ENCODE measurements at regions of chr18 and their contacts with region 1.

Region 1: GRCh38 chr18:21851327-21851972 is 110.9 kb downstream of the MIB1 start:
- DNase-seq: no peak
- ATAC-seq: no peak
- H3K4me3 ChIP-seq: no peak overlapping the region
- H3K27ac ChIP-seq: no peak overlapping the region
- H3K4me1 ChIP-seq: no peaks in the 10 kb centered on the region
- H3K27me3 ChIP-seq: no peaks in the 10 kb centered on the region

Region 2: DNA sequence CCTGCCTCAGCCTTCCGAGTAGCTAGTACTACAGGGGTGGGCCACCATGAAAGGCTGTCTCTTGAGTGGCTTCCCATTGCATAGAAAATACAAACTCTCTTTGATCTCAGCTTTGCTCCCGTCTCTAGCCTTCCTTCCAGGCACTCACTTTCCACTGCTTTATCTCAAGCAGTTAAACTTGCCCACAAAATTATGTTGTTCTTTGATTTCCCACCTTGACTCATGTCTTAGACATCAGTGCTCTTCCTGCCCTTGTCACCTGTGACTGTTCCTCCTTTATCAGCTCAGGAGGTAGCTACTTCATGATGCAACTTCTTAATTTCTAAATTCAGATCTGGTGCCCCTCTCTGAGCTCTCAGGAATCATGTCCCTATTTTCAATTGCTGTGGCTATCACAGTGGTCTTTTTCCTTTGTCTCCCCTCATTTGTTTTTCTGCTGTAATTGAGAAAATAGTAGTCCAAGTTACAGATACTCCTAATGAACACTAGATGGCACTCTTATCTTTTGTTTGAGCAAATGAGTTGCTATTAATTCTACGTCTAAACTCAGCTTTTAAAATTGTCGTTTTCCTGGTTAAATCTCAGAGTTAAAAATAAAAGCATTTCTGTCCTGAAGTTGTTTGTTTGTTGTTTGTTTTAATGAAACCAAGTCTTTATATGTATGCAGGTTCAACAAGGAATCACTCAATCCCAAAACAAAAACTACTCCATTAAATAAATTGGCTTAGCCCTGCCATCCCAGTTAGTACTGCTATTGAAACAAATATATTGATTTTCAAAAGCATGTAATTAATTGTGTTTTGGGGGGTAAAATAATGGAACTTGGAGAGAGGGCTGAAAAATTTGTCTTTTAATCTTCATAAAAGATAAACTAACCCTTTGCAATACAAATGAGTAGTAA is 656.3 kb before region 1 on chr18:
- intact Hi-C with region 1: loop called in 1 of 2 experiments (anchors 10 kb)
- DNase-seq: no peak
- ATAC-seq: no peak
- H3K4me3 ChIP-seq: no peak overlapping the region
- H3K27ac ChIP-seq: no peak overlapping the region
- H3K4me1 ChIP-seq: no peaks in the 10 kb centered on the region
- H3K27me3 ChIP-seq: no peaks in the 10 kb centered on the region

Region 3: DNA sequence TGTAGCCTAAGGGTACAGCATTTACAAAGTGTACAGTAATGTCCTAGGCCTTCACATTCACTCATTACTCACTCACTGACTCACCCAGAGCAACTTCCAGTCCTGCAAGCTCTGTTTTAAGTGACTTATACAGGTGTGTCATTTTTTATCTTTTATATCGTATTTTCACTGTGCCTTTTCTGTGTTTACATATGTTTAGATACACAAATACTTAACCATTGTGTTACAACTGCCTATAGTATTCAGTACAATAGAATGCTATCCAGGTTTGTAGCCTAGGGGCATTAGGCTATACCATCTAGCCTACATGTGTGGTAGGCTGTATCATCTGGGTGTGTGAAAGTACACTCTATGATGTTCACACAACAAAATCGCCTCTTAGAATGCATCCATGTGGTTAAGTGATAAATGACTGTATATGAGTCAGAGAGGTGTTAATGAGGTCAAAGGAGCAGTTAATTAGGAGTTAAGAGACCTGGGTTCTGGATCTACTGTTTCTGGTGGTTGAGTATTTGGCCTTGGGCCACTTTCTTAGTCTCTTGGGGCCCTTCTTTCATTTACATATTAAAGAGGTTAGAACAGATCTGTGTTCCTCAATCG is 460.3 kb before region 1 on chr18:
- intact Hi-C with region 1: loop called in 1 of 2 experiments (anchors 10 kb)
- DNase-seq: no peak
- ATAC-seq: no peak
- H3K4me3 ChIP-seq: no peak overlapping the region
- H3K27ac ChIP-seq: no peak overlapping the region
- H3K4me1 ChIP-seq: peaks cover 0 to 3% of the 10 kb centered on the region in 2 donors
- H3K27me3 ChIP-seq: no peaks in the 10 kb centered on the region

Region 4: GRCh38 chr18:21489119-21489750 is 362.2 kb before region 1 on chr18:
- intact Hi-C with region 1: loop called (anchors 10 kb)
- DNase-seq: no peak
- ATAC-seq: peak; percentile 50
- H3K4me3 ChIP-seq: no peak overlapping the region
- H3K27ac ChIP-seq: no peak overlapping the region
- H3K4me1 ChIP-seq: no peaks in the 10 kb centered on the region
- H3K27me3 ChIP-seq: no peaks in the 10 kb centered on the region

Region 5: DNA sequence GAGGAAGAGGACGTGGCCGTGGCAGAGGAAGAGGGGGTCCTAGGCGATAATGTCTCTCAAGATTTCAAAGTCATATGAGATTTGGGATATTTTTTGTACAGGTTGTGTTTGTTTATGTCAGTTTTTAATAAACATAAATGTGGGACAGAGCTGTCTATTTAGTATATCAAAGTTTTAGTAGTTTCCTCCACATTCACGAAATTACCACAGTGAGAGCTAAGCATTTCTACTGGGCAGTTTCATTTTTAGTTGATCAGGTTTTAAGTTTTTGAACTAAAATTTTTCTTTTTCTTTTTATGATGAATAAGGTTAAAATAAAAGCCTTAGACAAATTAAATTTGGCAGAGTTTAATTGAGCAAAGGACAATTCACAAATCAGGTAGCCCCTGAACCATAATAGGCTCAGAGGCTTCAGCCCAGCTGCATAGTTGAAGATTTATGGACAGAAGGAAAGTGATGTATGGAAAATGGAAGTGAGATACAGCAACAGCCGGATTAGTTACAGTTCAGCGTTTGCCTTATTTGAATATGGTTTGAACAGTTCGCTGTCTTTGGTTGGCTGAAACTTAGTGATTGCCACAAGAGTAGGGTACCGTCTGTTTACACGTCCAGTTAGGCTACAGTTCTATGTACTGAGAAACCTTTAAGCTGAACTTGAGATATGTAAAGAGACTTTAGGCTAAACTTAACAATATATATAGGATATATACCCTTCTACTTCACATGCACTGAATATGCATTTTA is 222.2 kb before region 1 on chr18:
- intact Hi-C with region 1: loop called in 1 of 2 experiments (anchors 10 kb)
- DNase-seq: no peak
- ATAC-seq: no peak
- H3K4me3 ChIP-seq: no peak overlapping the region
- H3K27ac ChIP-seq: no peak overlapping the region
- H3K4me1 ChIP-seq: no peaks in the 10 kb centered on the region
- H3K27me3 ChIP-seq: no peaks in the 10 kb centered on the region

Region 6: GRCh38 chr18:21815101-21815500 is 36.3 kb before region 1 on chr18:
- intact Hi-C with region 1: loop called in 1 of 2 experiments (anchors 5 kb)
- DNase-seq: no peak
- ATAC-seq: no peak
- H3K4me3 ChIP-seq: no peak overlapping the region
- H3K27ac ChIP-seq: no peak overlapping the region
- H3K4me1 ChIP-seq: no peaks in the 10 kb centered on the region
- H3K27me3 ChIP-seq: no peaks in the 10 kb centered on the region